ENCODE measurements at regions of chrX and their contacts with region 1.

Region 1: DNA sequence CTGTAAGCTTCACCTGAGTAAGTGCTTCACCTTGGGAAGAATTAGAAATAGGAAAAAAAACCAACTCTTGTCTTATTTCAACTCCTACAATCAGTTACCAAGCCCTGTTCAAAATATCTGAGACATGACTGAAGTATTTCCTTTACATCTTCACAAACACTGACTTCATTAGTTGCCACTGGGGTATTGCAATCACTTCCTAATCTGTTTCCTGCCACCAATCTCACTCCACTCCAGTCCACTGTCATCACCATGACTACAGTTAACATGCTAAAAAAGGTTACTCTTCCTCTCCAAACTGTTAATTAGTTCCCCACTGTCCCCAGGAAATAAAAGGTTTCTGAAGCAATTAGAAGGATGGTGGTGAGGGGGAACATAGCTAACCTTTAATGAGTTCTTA is 3.3 kb upstream of the SUPT20HL1 start:
- DNase-seq: no peak
- H3K4me3 ChIP-seq: no peak overlapping the region
- H3K4me3 Mint-ChIP-seq: no peak overlapping the region
- H3K27ac ChIP-seq: no peak overlapping the region
- H3K27ac Mint-ChIP-seq: no peak overlapping the region
- H3K4me1 ChIP-seq: no peaks in the 10 kb centered on the region
- H3K4me1 Mint-ChIP-seq: no peaks in the 10 kb centered on the region
- H3K27me3 ChIP-seq: no peaks in the 10 kb centered on the region
- H3K27me3 Mint-ChIP-seq: no peaks in the 10 kb centered on the region

Region 2: DNA sequence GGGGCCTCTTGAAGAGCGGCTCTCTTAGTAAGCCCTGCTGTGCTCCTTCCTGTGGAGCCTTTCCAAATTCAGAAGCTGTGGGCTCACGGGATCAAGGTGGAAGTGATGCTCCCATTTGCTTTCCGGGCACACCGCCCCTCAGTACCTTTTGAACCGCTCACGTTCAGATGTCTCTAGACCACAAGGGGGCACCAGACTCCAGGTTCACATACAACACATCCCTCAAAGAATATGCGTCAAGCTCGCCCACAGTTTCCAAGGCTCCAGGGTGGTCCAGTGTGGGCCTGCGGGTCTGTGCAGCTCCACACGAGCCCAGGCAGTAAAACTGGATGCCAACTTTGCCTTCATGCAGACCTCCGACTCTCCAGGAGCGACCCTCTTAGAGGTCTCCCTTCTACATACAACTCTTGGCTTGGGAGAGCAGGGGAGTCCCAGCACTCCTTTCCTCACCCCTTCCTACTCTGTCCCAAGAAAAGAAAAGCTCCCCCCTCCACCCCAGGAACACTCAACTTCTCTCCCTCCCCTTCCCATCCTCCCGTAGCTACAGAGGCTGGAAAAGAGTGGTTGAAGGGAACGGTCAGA is 14.4 kb after region 1 on chrX:
- CTCF ChIA-PET with region 1: interaction called, 13 read pairs
- POLR2A ChIA-PET with region 1: no interaction called
- intact Hi-C with region 1: no loop called
- DNase-seq: peak; percentile 43 to 57 (median 56)
- H3K4me3 ChIP-seq: no peak overlapping the region
- H3K4me3 Mint-ChIP-seq: peak overlapping the region; percentile 18 to 75 (median 48)
- H3K27ac ChIP-seq: no peak overlapping the region
- H3K27ac Mint-ChIP-seq: peak overlapping the region in 1 of 7 donors; percentile 0
- H3K4me1 ChIP-seq: peaks cover 3% of the 10 kb centered on the region
- H3K4me1 Mint-ChIP-seq: peaks cover 5 to 12% (median 8%) of the 10 kb centered on the region in 4 donors
- H3K27me3 ChIP-seq: no peaks in the 10 kb centered on the region
- H3K27me3 Mint-ChIP-seq: peaks cover 0 to 9% of the 10 kb centered on the region in 2 donors